B cell (primary cell): ENCODE measurements at regions of chr15 and their contacts with region 1.

Region 1: GRCh38 chr15:42474827-42475226 is 16.1 kb downstream of the ZNF106 start:
- DNase-seq: no peak
- ATAC-seq: no peak
- H3K4me3 ChIP-seq: no peak overlapping the region
- H3K4me3 Mint-ChIP-seq: no peak overlapping the region
- H3K27ac ChIP-seq: no peak overlapping the region
- H3K27ac Mint-ChIP-seq: peak overlapping the region; percentile 38
- H3K4me1 ChIP-seq: peaks cover 0 to 4% of the 10 kb centered on the region in 2 donors
- H3K4me1 Mint-ChIP-seq: peaks cover 36% of the 10 kb centered on the region
- H3K27me3 ChIP-seq: no peaks in the 10 kb centered on the region
- H3K27me3 Mint-ChIP-seq: no peaks in the 10 kb centered on the region
- CTCF ChIP-seq: no peak

Region 2: DNA sequence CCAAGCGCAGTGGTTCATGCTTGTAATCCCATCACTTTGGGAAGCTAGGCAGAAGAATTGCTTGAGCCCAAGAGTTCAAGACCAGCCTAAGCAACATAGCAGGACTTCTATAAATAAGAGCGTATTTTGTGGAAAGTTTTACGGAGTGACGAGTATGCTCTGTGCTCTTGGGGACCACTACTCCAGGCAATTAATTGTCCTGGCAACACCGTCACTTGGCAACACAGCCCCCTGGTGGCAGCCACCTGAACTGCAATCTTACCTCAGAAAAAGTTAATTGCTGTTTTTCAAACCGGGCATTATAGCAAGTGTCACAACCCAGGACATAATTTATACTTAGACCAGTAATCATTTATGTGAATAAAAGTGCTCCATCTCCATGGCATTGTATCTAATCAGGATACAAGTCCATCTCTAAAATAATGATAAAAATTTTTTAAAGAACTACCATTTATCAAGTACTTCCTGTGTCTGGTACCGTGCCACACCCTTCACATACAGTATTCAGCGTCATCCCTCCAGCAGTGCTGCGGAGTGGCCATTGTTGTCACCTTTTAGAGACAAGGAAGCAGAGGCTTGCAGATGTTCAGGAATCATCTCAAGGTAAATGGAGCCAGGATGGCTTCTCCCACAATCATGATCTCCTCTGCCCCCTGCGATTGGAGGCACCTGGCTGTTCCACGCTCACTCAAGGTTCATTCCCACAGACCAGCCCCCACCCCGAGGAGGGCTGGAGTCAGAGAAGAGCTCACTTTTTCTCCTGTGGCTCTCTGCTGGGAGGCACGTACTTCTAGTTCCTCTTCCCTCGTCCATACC is 415.0 kb before region 1 on chr15:
- CTCF ChIA-PET with region 1: no interaction called
- POLR2A ChIA-PET with region 1: no interaction called
- intact Hi-C with region 1: no loop called
- DNase-seq: peak; percentile 76
- ATAC-seq: peak; percentile 63
- H3K4me3 ChIP-seq: no peak overlapping the region
- H3K4me3 Mint-ChIP-seq: no peak overlapping the region
- H3K27ac ChIP-seq: no peak overlapping the region
- H3K27ac Mint-ChIP-seq: no peak overlapping the region
- H3K4me1 ChIP-seq: peaks cover 7% of the 10 kb centered on the region in 2 donors
- H3K4me1 Mint-ChIP-seq: peaks cover 9% of the 10 kb centered on the region
- H3K27me3 ChIP-seq: peaks cover 0 to 29% (median 13%) of the 10 kb centered on the region in 4 experiments
- H3K27me3 Mint-ChIP-seq: peaks cover 34% of the 10 kb centered on the region
- CTCF ChIP-seq: peak; percentile 99

Region 3: DNA sequence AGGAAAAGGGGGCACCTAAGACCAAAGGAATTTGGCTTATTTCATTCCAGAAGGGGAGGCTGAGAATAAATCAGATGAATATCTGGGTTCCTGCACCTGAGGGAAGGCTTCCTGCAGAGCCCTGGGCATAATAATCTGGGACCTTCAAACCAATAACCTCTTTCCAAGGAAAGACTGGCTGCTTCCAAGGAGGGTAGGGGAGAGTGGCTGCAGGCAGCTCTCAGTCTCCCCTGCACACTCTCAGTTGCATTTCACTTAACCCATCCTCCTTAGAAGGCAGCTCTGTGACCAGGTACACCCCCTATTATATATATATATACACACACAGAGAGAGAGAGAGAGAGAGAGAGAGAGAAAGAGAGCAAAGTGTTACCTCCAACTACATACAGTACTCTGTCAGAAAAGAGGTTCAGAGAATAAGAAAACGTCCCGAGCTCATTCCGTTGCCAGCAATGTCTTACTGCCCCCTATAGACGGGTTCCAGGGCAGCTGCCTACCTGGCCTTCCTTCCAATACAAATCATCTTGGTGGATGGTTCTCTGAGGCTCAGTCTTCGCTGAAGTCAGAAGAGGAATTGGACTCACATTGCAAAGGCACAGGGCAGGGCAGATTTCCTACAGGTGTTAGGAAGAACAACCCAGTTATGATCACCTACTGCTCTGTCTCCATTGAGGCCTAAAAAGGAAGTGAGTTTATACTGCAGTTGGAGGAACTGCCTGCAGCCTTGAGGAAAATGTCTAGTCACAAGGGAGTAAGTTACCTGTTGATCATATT is 89.4 kb before region 1 on chr15:
- CTCF ChIA-PET with region 1: no interaction called
- POLR2A ChIA-PET with region 1: no interaction called
- intact Hi-C with region 1: no loop called
- DNase-seq: no peak
- ATAC-seq: no peak
- H3K4me3 ChIP-seq: no peak overlapping the region
- H3K4me3 Mint-ChIP-seq: no peak overlapping the region
- H3K27ac ChIP-seq: no peak overlapping the region
- H3K27ac Mint-ChIP-seq: no peak overlapping the region
- H3K4me1 ChIP-seq: no peaks in the 10 kb centered on the region
- H3K4me1 Mint-ChIP-seq: no peaks in the 10 kb centered on the region
- H3K27me3 ChIP-seq: no peaks in the 10 kb centered on the region
- H3K27me3 Mint-ChIP-seq: no peaks in the 10 kb centered on the region
- CTCF ChIP-seq: no peak

Region 4: DNA sequence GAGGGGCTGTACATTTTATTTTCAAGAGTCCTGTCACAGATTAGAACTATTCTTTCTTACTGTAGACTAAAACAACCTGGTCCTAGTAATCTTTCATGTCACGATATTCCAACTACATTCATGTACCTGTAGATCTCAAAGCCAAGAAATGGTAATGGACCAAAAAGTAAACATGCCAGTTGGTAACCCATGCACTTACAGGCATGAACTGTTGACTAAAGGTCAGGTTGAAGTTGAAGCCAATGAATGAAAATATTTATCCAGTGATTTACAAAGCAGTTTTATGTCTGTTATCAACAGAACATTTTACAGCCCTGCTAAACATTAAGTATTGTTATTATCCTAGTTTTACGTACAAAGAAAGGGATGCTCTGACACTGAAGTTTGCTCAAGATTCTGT is 48.5 kb after region 1 on chr15:
- CTCF ChIA-PET with region 1: no interaction called
- POLR2A ChIA-PET with region 1: interaction called, 11 read pairs
- intact Hi-C with region 1: no loop called
- DNase-seq: no peak
- ATAC-seq: no peak
- H3K4me3 ChIP-seq: no peak overlapping the region
- H3K4me3 Mint-ChIP-seq: no peak overlapping the region
- H3K27ac ChIP-seq: no peak overlapping the region
- H3K27ac Mint-ChIP-seq: no peak overlapping the region
- H3K4me1 ChIP-seq: no peaks in the 10 kb centered on the region
- H3K4me1 Mint-ChIP-seq: no peaks in the 10 kb centered on the region
- H3K27me3 ChIP-seq: no peaks in the 10 kb centered on the region
- H3K27me3 Mint-ChIP-seq: no peaks in the 10 kb centered on the region
- CTCF ChIP-seq: no peak

Region 5: DNA sequence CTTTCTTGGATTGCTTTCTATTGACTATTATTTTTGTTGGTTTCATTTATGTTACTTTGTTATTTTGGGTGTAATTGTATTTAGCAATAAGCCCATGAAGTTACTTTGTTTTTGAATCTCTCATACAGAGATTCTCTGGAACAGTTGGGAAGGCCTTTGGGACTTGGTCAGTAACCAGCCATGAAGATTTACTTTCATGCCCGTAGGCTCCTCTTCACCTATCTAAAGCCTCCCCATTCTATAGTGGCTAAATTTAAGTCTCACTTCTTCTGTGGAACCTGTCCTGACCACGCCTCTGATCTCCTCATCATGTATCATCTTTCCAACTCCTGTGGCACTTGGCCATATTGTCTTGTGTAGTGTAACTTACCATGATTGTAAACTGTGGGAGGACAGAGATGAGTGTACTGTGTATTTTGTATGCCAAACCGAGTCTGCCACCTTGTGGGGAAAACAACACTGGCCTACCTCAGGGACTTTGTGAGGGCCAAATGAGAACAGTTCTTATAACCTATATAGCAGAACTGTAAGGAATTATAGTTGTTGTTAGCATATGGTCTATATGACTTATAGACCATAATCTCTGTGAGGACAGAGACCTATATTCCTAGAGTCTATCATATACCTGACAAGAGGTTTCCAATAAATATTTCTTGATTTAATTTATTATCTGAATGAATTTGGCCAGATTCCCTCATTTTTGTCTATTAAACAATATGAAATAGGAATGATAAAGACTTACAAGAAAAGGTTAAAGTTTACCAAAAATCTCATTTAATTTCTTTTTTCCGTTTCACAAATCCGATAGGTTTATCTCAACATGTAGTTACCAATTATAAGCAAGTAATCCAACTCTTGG is 175.6 kb after region 1 on chr15:
- CTCF ChIA-PET with region 1: interaction called, 4 read pairs
- POLR2A ChIA-PET with region 1: no interaction called
- intact Hi-C with region 1: loop called (anchors 1 kb)
- DNase-seq: peak; percentile 67
- ATAC-seq: peak; percentile 70
- H3K4me3 ChIP-seq: no peak overlapping the region
- H3K4me3 Mint-ChIP-seq: no peak overlapping the region
- H3K27ac ChIP-seq: no peak overlapping the region
- H3K27ac Mint-ChIP-seq: no peak overlapping the region
- H3K4me1 ChIP-seq: no peaks in the 10 kb centered on the region
- H3K4me1 Mint-ChIP-seq: no peaks in the 10 kb centered on the region
- H3K27me3 ChIP-seq: no peaks in the 10 kb centered on the region
- H3K27me3 Mint-ChIP-seq: no peaks in the 10 kb centered on the region
- CTCF ChIP-seq: peak; percentile 63